HEK293 (cell line): ENCODE measurements at regions of chr6 and their contacts with region 1.

Region 1: GRCh38 chr6:24646782-24647181 is 791 bp upstream of the KIAA0319 start:
- H3K4me3 ChIP-seq: no peak overlapping the region
- H3K27ac ChIP-seq: no peak overlapping the region
- H3K4me1 ChIP-seq: no peaks in the 10 kb centered on the region
- CTCF ChIP-seq: no peak

Region 2: DNA sequence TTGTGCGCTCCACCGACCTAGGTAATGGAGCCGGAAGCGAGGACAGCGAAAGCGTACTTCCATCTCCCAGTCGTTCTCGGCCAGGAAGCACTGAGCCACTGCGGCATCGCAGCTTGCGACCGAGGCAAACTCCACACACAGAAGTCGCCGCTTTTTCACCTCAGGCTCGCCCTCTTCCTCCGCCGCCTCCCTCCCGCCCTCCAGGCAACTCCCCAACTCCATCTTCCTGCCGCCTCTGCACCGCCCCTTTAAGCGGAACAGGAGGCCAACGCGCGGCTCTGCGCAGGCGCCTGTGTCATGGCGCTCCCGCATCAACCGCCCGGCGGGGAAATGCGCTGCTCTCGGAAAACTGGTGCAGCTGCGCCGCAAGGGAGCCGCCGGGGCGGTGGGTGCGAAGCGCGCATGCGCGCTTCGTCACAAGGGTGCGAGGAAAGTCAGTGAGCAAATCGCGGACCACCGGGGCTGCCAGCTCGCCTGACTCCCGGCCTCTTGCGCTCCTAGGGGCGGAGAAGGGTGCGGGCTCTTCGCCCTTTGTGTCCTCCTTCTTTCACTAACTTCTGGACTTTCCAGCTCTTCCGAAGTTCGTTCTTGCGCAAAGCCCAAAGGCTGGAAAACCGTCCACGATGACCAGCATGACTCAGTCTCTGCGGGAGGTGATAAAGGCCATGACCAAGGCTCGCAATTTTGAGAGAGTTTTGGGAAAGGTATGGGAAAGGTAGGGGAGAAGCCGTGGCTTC is 20.0 kb after region 1 on chr6 and contains the starts of genes ACOT13 and TDP2:
- CTCF ChIA-PET with region 1: interaction called, 5 read pairs
- POLR2A ChIA-PET with region 1: interaction called, 15 read pairs
- H3K4me3 ChIP-seq: peak within 1 kb of the TSS; percentile 93
- H3K27ac ChIP-seq: peak within 1 kb of the TSS; percentile 71
- H3K4me1 ChIP-seq: no peaks in the 10 kb centered on the region; the same call in 1 of the 2 replicates
- CTCF ChIP-seq: peak; percentile 69